ENCODE measurements at regions of chr17 and their contacts with region 1.

Region 1: GRCh38 chr17:81294856-81295680 is at the start of gene SLC38A10:
- DNase-seq: peak; percentile 88
- H3K4me3 Mint-ChIP-seq: peak within 1 kb of the TSS; percentile 84
- H3K27ac Mint-ChIP-seq: peak within 1 kb of the TSS; percentile 93
- H3K4me1 Mint-ChIP-seq: peaks cover 13% of the 10 kb centered on the region
- H3K27me3 Mint-ChIP-seq: peaks cover under 1% of the 10 kb centered on the region
- CTCF ChIP-seq: no peak
- total RNA-seq, gene SLC38A10: 98.2 and 108 TPM in 2 replicates

Region 2: GRCh38 chr17:80529104-80529903 is 765.8 kb before region 1 on chr17:
- CTCF ChIA-PET with region 1: no interaction called
- POLR2A ChIA-PET with region 1: no interaction called
- intact Hi-C with region 1: no loop called
- DNase-seq: no peak
- H3K4me3 Mint-ChIP-seq: no peak overlapping the region
- H3K27ac Mint-ChIP-seq: no peak overlapping the region
- H3K4me1 Mint-ChIP-seq: peaks cover 8% of the 10 kb centered on the region
- H3K27me3 Mint-ChIP-seq: no peaks in the 10 kb centered on the region
- CTCF ChIP-seq: no peak

Region 3: DNA sequence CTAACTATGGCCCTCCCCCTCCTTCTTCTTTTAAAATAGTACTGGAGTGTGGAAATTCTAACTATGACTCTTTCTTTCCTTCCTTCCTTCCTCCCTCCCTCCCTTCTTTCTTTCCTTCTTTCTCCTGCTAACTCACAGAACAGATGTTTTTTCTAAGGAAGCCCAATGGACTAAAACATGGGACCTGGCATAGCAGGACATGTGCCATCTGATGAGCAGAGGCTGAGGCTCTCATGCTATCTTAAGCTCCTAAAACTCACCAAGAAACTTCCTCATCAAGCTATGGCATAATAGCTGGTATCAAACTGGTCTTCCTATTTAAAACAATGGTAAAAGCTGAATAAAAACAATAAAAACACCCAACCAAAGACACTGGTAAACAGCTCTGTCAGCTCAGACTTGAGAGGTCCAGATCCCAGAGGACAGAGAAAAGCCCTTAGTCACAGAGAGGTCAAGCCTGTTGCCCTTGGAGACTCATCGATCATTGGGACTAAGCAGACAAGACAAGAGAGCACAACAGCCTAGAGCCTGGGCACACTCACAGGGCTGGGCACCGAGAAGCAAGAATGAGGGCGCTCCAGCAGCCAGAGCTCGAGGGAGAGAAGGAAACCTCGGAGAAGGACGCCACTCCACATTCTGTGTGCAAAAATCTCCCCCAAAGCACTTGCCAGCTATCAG is 27.5 kb before region 1 on chr17:
- CTCF ChIA-PET with region 1: no interaction called
- POLR2A ChIA-PET with region 1: no interaction called
- intact Hi-C with region 1: no loop called
- DNase-seq: no peak
- H3K4me3 Mint-ChIP-seq: no peak overlapping the region
- H3K27ac Mint-ChIP-seq: no peak overlapping the region
- H3K4me1 Mint-ChIP-seq: no peaks in the 10 kb centered on the region
- H3K27me3 Mint-ChIP-seq: no peaks in the 10 kb centered on the region
- CTCF ChIP-seq: no peak

Region 4: GRCh38 chr17:81309070-81309905 is 14.2 kb after region 1 on chr17:
- CTCF ChIA-PET with region 1: interaction called, 4 read pairs
- POLR2A ChIA-PET with region 1: interaction called, 14 read pairs
- intact Hi-C with region 1: no loop called
- DNase-seq: peak; percentile 74
- H3K4me3 Mint-ChIP-seq: peak overlapping the region; percentile 68
- H3K27ac Mint-ChIP-seq: peak overlapping the region; percentile 32
- H3K4me1 Mint-ChIP-seq: peaks cover 22% of the 10 kb centered on the region
- H3K27me3 Mint-ChIP-seq: no peaks in the 10 kb centered on the region
- CTCF ChIP-seq: peak; percentile 32

Region 5: GRCh38 chr17:81328978-81329919 is 34.2 kb after region 1 on chr17:
- CTCF ChIA-PET with region 1: interaction called, 3 read pairs
- POLR2A ChIA-PET with region 1: interaction called, 24 read pairs
- intact Hi-C with region 1: loop called (anchors 2 kb)
- DNase-seq: peak; percentile 99
- H3K4me3 Mint-ChIP-seq: peak overlapping the region; percentile 64
- H3K27ac Mint-ChIP-seq: peak overlapping the region; percentile 80
- H3K4me1 Mint-ChIP-seq: peaks cover 28% of the 10 kb centered on the region
- H3K27me3 Mint-ChIP-seq: no peaks in the 10 kb centered on the region
- CTCF ChIP-seq: no peak

Region 6: DNA sequence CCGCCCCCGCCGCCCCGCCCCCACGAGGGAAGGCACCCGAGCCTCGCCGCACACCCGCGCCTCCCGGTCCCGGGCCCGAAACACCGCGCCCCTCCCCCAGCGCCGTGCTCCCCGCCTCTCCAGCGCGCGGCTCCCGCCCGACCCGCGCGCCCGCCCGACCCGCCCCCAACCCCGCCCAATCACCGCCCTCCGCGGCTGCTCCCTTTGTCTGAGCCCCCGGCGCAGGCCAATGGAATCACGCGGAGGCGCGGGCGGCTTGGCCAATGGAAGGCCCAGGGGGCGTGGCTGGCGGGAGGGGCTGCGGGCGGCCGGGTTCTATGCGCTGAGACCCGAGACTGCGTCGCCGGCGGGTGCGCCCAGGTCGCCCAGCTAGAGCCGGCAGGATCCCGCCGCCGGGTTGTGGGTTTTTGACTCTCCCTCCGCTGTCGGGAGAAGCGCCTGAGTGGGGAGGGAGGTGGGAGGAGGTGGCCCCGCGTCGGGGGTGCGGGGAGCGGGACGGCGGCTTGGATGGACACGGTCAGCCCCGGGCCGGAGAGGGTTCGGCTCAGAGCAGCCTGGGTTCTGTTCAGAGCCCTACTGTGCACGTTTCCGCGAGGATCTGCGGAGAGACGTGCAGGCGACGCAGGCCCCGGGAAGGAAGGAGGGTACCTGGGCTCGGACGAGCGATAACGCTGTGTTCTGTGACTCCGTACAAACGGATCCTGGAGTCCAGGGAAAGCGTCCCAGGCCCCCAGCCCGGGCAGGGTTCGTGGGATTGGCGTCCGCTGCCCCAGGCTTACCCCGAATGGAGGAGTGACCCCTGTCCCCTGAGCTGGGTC is 51.2 kb after region 1 on chr17:
- CTCF ChIA-PET with region 1: no interaction called
- POLR2A ChIA-PET with region 1: interaction called, 10 read pairs
- intact Hi-C with region 1: no loop called
- DNase-seq: peak; percentile 95
- H3K4me3 Mint-ChIP-seq: peak overlapping the region; percentile 95
- H3K27ac Mint-ChIP-seq: no peak overlapping the region
- H3K4me1 Mint-ChIP-seq: peaks cover 16% of the 10 kb centered on the region
- H3K27me3 Mint-ChIP-seq: no peaks in the 10 kb centered on the region
- CTCF ChIP-seq: no peak

Region 7: GRCh38 chr17:81484195-81484979 is 189.3 kb after region 1 on chr17:
- CTCF ChIA-PET with region 1: interaction called, 14 read pairs
- POLR2A ChIA-PET with region 1: interaction called, 4 read pairs
- intact Hi-C with region 1: loop called (anchors 1 kb)
- DNase-seq: peak; percentile 70
- H3K4me3 Mint-ChIP-seq: no peak overlapping the region
- H3K27ac Mint-ChIP-seq: no peak overlapping the region
- H3K4me1 Mint-ChIP-seq: no peaks in the 10 kb centered on the region
- H3K27me3 Mint-ChIP-seq: no peaks in the 10 kb centered on the region
- CTCF ChIP-seq: peak; percentile 98

Region 8: DNA sequence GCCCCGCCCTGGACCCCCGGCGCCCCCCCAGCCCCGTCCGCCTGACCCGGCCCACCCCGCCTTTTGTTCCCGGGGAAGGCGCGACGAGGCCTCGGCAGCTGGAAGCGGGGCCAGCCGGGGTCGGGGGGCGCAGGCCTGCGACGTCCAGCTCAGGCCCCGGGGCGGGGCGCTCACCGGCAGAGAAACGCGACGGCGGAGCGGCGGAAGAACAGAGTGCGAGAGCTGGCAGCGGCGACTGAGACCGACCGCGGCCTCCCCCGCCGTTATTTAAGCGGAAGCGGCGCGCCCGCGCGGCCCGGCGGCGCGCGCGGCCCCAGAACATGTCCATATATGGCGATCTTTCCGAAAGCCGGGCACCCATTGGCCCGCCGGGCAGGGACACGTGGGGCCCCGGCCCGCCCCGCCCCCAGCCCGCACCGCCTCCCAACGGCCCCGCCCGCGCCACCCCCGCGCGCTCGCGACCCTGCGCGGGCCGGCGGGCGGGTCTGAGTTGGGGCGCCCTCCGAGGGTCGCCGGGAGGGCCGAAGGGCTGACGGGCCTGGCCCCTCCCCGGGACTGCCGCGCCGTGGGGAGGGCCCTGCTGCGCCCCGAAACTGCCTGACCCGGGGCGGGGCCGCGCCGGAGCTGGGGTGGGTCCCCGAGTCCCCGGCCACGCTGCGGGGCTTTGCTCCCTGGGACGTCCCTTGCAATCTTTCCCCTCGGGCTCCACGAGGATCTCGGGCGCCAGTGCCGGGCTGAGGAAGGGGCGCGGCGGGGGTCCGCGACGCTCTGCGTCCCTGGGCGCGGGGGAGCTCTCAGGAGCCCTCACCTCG is 217.7 kb after region 1 on chr17 and contains the start of gene ACTG1:
- CTCF ChIA-PET with region 1: no interaction called
- POLR2A ChIA-PET with region 1: interaction called, 10 read pairs
- intact Hi-C with region 1: no loop called
- DNase-seq: peak; percentile 92
- H3K4me3 Mint-ChIP-seq: peak within 1 kb of the TSS; percentile 92
- H3K27ac Mint-ChIP-seq: peak within 1 kb of the TSS; percentile 91
- H3K4me1 Mint-ChIP-seq: peaks cover 25% of the 10 kb centered on the region
- H3K27me3 Mint-ChIP-seq: no peaks in the 10 kb centered on the region
- CTCF ChIP-seq: no peak
- total RNA-seq, gene ACTG1: 1,056 and 1,461 TPM in 2 replicates

Measured in MCF 10A (cell line).